ENCODE measurements at regions of chr1 and their contacts with region 1.

Region 1: GRCh38 chr1:8878448-8879347 is at the start of gene ENO1:
- DNase-seq: peak; percentile 99
- ATAC-seq: peak; percentile 72
- H3K4me3 Mint-ChIP-seq: peak within 1 kb of the TSS; percentile 90
- H3K27ac Mint-ChIP-seq: peak within 1 kb of the TSS; percentile 99
- H3K4me1 Mint-ChIP-seq: peaks cover 35% of the 10 kb centered on the region
- H3K27me3 Mint-ChIP-seq: no peaks in the 10 kb centered on the region
- total RNA-seq, gene ENO1: 2,573 to 3,583 TPM

Region 2: GRCh38 chr1:8423650-8424538 is 454.8 kb before region 1 on chr1:
- CTCF ChIA-PET with region 1: no interaction called
- POLR2A ChIA-PET with region 1: no interaction called
- intact Hi-C with region 1: loop called in 1 of 2 experiments (anchors 2 kb)
- DNase-seq: peak; percentile 77
- ATAC-seq: peak; percentile 66
- H3K4me3 Mint-ChIP-seq: peak overlapping the region; percentile 84
- H3K27ac Mint-ChIP-seq: peak overlapping the region; percentile 97
- H3K4me1 Mint-ChIP-seq: peaks cover 42% of the 10 kb centered on the region
- H3K27me3 Mint-ChIP-seq: no peaks in the 10 kb centered on the region

Region 3: DNA sequence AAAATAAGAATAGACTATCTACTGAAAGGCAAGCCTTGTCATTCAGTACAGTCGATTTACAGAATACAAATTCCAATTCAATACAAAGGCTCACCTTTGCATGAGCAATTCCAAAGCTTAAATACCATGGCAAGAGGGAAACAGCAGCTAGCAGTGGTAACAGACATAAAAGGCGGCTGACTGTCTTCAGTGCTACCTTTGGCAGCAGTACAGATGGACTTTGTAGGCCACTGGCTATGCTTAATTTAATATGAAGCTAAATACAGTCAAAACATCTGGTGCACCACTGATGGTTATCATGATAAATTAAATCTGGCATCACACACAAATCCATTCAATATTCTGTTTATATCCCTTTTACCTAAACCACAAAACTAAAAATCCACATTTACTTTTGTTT is 123.7 kb before region 1 on chr1:
- CTCF ChIA-PET with region 1: no interaction called
- POLR2A ChIA-PET with region 1: no interaction called
- intact Hi-C with region 1: no loop called
- DNase-seq: no peak
- ATAC-seq: no peak
- H3K4me3 Mint-ChIP-seq: no peak overlapping the region
- H3K27ac Mint-ChIP-seq: no peak overlapping the region
- H3K4me1 Mint-ChIP-seq: peaks cover 30% of the 10 kb centered on the region
- H3K27me3 Mint-ChIP-seq: no peaks in the 10 kb centered on the region

Region 4: DNA sequence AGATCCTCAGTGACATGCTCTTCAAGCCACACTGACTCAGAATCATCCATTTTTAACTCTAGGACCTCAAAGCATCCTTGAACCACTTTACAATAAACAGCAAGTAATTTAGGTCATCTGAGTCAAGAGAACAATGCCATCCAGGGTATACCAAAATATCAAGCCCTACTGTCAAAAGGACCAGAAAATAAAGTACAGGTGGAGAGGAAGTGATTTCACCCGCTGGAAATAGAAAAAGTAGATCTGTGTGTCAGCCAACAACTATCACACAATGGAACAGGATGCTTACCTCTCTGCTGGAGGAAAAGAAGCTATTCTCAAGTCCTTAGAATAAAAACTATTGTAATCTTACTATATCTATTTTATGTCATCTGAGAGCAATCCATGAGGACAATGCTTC is 98.3 kb before region 1 on chr1:
- CTCF ChIA-PET with region 1: no interaction called
- POLR2A ChIA-PET with region 1: no interaction called
- intact Hi-C with region 1: no loop called
- DNase-seq: no peak
- ATAC-seq: no peak
- H3K4me3 Mint-ChIP-seq: no peak overlapping the region
- H3K27ac Mint-ChIP-seq: no peak overlapping the region
- H3K4me1 Mint-ChIP-seq: peaks cover 17% of the 10 kb centered on the region
- H3K27me3 Mint-ChIP-seq: no peaks in the 10 kb centered on the region

Region 5: DNA sequence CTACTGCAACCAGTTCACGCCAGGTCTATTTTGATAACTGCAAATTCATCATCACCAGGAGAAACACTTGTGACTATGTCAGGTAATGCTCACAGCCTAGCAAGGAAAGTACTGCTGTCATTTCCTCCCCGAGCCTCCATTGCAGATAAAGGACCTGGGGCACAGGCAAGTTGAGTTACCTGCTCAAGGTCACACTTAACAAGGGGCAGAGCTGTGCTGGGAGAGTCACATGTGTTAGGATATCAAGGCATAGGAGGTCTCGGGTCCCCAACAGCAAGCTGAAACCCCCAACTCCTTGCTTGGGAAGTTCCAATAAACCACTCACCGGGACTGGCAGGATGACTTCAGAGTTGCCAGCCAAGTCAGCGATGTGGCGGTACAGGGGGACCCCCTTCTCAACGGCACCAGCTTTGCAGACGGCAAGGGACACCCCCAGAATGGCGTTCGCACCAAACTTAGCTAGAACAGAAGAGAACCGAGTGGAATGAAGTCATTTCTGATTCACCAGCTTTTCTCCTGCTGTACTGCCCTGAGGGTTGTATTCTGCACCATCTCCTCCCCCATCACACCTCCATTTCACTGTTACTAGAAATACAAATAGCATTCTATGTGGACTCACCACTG is 11.8 kb before region 1 on chr1:
- CTCF ChIA-PET with region 1: interaction called, 4 read pairs
- POLR2A ChIA-PET with region 1: interaction called, 37 read pairs
- intact Hi-C with region 1: loop called in 1 of 2 experiments (anchors 1 kb)
- DNase-seq: peak; percentile 85
- ATAC-seq: peak; percentile 76
- H3K4me3 Mint-ChIP-seq: peak overlapping the region; percentile 42
- H3K27ac Mint-ChIP-seq: peak overlapping the region; percentile 86
- H3K4me1 Mint-ChIP-seq: peaks cover 63% of the 10 kb centered on the region
- H3K27me3 Mint-ChIP-seq: no peaks in the 10 kb centered on the region

Region 6: DNA sequence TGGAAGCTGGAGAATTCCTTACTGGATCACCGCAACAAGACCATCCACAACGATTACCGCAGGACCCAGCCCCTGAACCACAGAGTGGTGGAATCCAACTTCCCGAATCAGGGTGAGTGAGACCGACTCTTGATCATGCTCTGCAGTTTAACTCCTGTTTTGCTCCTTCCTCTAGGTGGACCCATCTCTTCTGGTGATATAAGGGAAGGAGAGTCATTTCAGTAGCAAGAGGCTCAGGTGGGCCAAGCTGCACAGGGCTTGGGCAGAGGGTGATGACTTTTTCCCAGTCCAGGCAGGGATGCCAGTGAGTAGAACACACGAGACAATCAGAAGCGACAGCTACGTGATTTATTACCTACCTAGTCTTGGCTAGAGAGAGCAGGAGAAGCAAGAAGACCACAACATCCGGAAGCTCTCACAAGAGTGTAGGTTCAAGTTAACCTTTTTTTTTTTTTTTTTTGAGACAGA is 92.2 kb after region 1 on chr1:
- CTCF ChIA-PET with region 1: no interaction called
- POLR2A ChIA-PET with region 1: no interaction called
- intact Hi-C with region 1: loop called in 1 of 2 experiments (anchors 1 kb)
- DNase-seq: peak; percentile 74
- ATAC-seq: peak; percentile 94
- H3K4me3 Mint-ChIP-seq: peak overlapping the region; percentile 72
- H3K27ac Mint-ChIP-seq: peak overlapping the region; percentile 84
- H3K4me1 Mint-ChIP-seq: peaks cover 39% of the 10 kb centered on the region
- H3K27me3 Mint-ChIP-seq: no peaks in the 10 kb centered on the region

Region 7: DNA sequence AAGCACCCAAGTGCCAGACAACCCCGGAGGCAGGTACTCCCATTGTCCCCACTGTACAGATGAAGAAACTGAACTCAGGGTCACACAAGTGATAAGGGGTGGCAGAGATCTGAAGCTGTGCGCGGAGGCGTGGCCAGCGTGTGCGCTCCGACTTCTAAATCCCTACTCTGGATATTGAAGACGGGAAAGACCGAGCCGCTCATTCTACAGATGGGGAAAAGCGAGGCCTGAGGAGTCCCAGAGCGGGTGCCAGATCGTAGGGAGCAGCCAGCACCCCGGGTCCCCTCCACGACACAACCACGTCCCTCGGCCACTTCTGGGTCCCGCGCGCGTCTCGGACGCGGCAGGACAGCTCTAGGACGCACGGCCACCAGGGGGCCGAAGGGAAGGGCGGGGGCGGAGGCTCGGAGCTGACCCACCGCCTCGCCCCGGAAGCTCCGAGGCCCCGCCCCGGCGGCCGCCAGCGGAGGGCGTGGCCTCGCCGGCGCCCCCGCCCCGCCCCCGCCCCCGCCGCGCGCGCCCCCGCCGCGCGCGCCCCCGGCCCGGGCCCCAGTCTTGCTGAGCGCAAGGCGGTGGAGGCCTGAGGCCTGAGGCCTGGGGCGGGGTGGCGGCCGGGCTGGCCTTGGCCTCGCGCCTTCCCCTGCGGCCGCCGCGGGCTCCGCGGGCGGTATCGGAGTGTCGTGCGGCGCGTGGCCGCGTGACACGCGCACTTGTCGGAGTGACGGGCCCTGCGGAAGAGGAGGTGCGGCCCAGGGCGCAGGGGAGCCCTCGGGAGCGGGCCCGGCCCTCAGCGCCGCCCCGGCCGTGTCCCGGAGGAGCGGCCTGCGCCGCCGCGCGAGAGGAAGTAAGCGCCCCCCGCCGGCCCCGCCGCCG is 355.8 kb after region 1 on chr1 and contains the start of gene H6PD:
- CTCF ChIA-PET with region 1: no interaction called
- POLR2A ChIA-PET with region 1: no interaction called
- intact Hi-C with region 1: loop called in 1 of 2 experiments (anchors 1 kb)
- DNase-seq: peak; percentile 80
- ATAC-seq: peak; percentile 76
- H3K4me3 Mint-ChIP-seq: peak within 1 kb of the TSS; percentile 82
- H3K27ac Mint-ChIP-seq: peak within 1 kb of the TSS; percentile 90
- H3K4me1 Mint-ChIP-seq: peaks cover 41% of the 10 kb centered on the region
- H3K27me3 Mint-ChIP-seq: no peaks in the 10 kb centered on the region
- total RNA-seq, gene H6PD: 8.8 to 9.6 TPM